ENCODE measurements at regions of chr22 and their contacts with region 1.

Region 1: GRCh38 chr22:37544955-37545699 is 15.2 kb upstream of the CDC42EP1 start:
- DNase-seq: no peak
- ATAC-seq: peak; percentile 64
- H3K4me3 ChIP-seq: peak overlapping the region; percentile 21 to 44; a peak in 3 of 4 replicates
- H3K27ac ChIP-seq: peak overlapping the region; percentile 82
- H3K4me1 ChIP-seq: peaks cover 37% of the 10 kb centered on the region
- H3K27me3 ChIP-seq: no peaks in the 10 kb centered on the region
- CTCF ChIP-seq: peak; percentile 87

Region 2: DNA sequence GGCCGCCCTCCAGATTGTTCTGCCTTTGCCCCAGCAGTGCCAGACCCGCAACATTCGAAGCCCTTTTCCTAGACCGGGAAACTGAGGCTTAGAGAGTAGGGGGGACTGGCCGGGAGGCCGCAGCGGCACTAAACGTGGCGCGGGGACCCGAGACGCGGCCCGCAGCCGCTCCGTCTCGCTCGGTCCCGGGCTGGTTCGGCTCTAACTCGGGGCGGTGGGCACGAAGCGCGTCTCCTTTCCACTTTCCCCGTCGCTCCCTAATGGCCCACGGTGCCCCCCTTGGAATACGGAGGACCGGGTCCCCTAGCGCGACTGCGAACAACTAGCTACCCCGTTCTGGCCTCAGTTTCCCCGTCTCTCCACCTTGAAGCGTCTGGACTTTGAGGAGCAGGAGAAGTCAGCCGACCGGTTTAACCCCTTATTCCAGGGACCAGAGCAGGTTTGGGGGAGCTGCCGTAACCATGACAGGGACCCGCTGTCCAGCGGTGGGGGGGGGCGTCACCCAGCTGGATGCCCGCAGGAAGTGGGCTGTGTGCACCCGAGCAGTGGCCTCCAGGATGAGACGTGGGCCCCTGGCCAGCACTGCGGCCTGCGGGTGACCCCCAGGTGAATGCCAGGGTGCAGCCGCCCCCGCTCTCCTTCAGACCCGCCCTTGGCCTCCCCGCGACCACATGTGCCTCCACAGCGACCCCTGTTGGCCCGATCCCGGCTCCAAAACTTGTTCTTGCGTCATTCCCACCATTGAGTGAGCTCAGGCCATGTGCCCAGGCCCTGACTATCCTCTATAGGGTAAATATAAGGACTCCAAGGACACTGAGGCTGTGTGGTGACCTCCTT is 16.3 kb after region 1 on chr22:
- CTCF ChIA-PET with region 1: interaction called, 14 read pairs
- POLR2A ChIA-PET with region 1: interaction called, 3 read pairs
- in situ Hi-C with region 1: no loop called
- intact Hi-C with region 1: no loop called
- DNase-seq: no peak
- ATAC-seq: peak; percentile 66
- H3K4me3 ChIP-seq: peak overlapping the region; percentile 68 to 77
- H3K27ac ChIP-seq: peak overlapping the region; percentile 84
- H3K4me1 ChIP-seq: peaks cover 32% of the 10 kb centered on the region
- H3K27me3 ChIP-seq: no peaks in the 10 kb centered on the region
- CTCF ChIP-seq: peak; percentile 86; the same call in 1 of the 2 replicates

Region 3: GRCh38 chr22:37566903-37567820 is 22.0 kb after region 1 on chr22:
- CTCF ChIA-PET with region 1: interaction called, 14 read pairs
- POLR2A ChIA-PET with region 1: interaction called, 3 read pairs
- in situ Hi-C with region 1: no loop called
- intact Hi-C with region 1: no loop called
- DNase-seq: no peak
- ATAC-seq: peak; percentile 70
- H3K4me3 ChIP-seq: no peak overlapping the region
- H3K27ac ChIP-seq: 0 out of 2 replicates have a peak overlapping the region, but pooled peaks have one; percentile 34
- H3K4me1 ChIP-seq: peaks cover 44% of the 10 kb centered on the region
- H3K27me3 ChIP-seq: no peaks in the 10 kb centered on the region
- CTCF ChIP-seq: peak; percentile 87

Region 4: DNA sequence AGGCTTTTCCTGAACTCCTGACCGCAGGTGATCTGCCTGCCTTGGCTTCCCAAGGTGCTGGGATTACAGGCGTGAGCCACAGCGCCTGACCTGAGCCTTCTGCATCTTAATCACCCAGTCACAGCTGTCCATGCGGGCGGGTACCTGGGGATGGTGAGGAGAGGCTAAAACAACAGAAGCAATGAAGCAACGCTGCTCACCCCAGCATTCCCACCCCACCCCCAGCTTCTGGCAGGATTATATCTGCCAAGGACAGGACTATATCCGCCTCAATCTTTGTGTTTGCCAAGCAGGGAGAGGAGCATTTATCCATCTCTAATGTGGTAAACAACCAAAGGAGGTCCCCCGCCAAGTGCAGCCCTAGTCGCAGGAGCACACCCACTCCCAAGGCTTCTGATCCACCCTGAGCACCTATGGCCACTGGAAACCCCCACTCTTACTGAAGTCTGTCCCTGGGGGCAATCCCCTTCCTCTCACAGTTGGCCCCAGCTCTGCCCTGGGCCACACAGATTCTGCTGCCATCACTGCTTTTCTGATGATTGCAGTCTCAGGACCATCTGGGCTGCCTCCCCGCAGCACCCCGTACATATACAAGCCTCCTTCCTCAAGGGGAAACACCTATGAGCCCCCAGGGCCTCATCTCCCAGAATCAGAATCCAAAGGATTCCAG is 43.6 kb after region 1 on chr22:
- CTCF ChIA-PET with region 1: interaction called, 12 read pairs
- POLR2A ChIA-PET with region 1: no interaction called
- in situ Hi-C with region 1: no loop called
- intact Hi-C with region 1: no loop called
- DNase-seq: no peak
- ATAC-seq: no peak
- H3K4me3 ChIP-seq: no peak overlapping the region
- H3K27ac ChIP-seq: no peak overlapping the region
- H3K4me1 ChIP-seq: no peaks in the 10 kb centered on the region
- H3K27me3 ChIP-seq: no peaks in the 10 kb centered on the region
- CTCF ChIP-seq: no peak

Measured in Panc1 (cell line).